H1 (cell line): ENCODE measurements at regions of chr2 and their contacts with region 1.

Region 1: DNA sequence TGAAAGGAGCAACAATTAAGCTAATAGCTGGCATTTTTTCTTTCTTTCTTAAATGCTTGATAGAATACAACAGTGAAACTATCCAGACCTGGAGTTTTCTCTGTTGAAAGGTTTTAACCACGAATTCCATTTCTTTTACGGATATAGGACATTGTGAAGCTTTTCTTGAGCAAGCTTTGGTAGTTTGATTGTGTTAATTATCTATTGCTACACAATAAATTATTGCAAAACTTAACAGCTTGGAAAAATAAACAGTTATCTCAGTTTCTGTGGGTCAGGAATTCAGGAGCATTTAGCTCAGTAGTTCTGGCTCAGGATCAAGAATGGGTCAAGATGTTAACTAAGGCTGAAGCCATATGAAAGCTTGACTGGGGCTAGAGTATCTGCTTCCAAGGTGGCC is 11.7 kb downstream of the PHOSPHO2 start:
- DNase-seq: no peak
- H3K4me3 ChIP-seq: no peak overlapping the region
- H3K27ac ChIP-seq: no peak overlapping the region
- H3K4me1 ChIP-seq: 0 out of 7 replicates have a peak, but pooled peaks cover 0 to 3% (median 0%) of the 10 kb centered on the region in 4 experiments
- H3K27me3 ChIP-seq: no peaks in the 10 kb centered on the region
- CTCF ChIP-seq: no peak
- EP300 ChIP-seq: no peak
- POLR2A ChIP-seq: no peak
- RAD21 ChIP-seq: no peak

Region 2: DNA sequence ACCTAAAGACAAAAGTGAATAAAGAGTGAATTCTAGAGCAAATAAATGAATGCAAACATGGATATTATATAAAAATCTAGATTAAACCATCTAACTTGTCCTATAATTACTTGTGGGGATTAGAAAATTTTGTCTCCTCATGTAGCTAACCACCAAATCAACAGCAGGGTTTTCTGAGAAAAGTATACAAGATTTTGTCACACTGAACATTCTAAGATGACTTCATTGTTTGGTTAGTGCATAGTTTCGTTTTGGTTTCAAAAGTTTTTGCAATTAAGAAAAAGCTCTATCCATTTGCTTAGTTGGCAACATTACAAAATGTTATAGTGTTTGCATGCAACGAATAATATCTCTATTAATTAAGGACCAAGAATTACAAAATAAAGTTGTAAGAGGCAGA is 468.6 kb before region 1 on chr2:
- CTCF ChIA-PET with region 1: no interaction called
- POLR2A ChIA-PET with region 1: no interaction called
- DNase-seq: no peak
- H3K4me3 ChIP-seq: no peak overlapping the region
- H3K27ac ChIP-seq: no peak overlapping the region
- H3K4me1 ChIP-seq: no peaks in the 10 kb centered on the region
- H3K27me3 ChIP-seq: no peaks in the 10 kb centered on the region
- CTCF ChIP-seq: no peak
- EP300 ChIP-seq: no peak
- POLR2A ChIP-seq: no peak
- RAD21 ChIP-seq: no peak

Region 3: GRCh38 chr2:169716238-169716886 is 10.4 kb after region 1 on chr2:
- CTCF ChIA-PET with region 1: interaction called, 4 read pairs
- POLR2A ChIA-PET with region 1: interaction called, 10 read pairs
- DNase-seq: no peak
- H3K4me3 ChIP-seq: no peak overlapping the region
- H3K27ac ChIP-seq: no peak overlapping the region
- H3K4me1 ChIP-seq: peaks cover 0 to 5% (median 1%) of the 10 kb centered on the region in 4 experiments; a peak in 1 of 7 replicates
- H3K27me3 ChIP-seq: no peaks in the 10 kb centered on the region
- CTCF ChIP-seq: no peak
- EP300 ChIP-seq: no peak
- POLR2A ChIP-seq: no peak
- RAD21 ChIP-seq: no peak

Region 4: DNA sequence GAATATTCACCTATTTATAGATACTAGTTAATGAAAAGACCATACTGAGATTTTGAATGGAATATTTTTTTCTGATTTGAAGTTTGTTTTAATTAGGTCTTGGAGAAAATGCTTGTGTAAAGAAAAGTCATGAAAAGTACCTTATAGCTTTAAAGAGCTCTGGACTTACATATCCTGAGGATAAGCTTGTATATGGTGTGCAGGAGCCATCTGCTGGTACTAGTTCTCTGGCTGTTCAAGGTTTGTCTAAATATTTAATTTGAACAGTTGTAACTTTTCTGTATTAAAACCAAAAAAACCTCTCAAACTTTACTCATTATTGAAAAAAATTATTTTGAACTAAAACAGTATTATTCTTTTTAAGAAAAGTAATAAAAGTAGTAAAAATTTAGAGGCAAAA is 171.5 kb after region 1 on chr2:
- CTCF ChIA-PET with region 1: no interaction called
- POLR2A ChIA-PET with region 1: no interaction called
- DNase-seq: no peak
- H3K4me3 ChIP-seq: no peak overlapping the region
- H3K27ac ChIP-seq: no peak overlapping the region
- H3K4me1 ChIP-seq: no peaks in the 10 kb centered on the region
- H3K27me3 ChIP-seq: no peaks in the 10 kb centered on the region
- CTCF ChIP-seq: peak in 1 of 3 experiments; percentile 4; a peak in 1 of 4 replicates
- EP300 ChIP-seq: no peak
- POLR2A ChIP-seq: no peak
- RAD21 ChIP-seq: peak; percentile 28 to 41; a peak in 3 of 4 replicates

Region 5: GRCh38 chr2:169900686-169901085 is 194.8 kb after region 1 on chr2:
- CTCF ChIA-PET with region 1: no interaction called
- POLR2A ChIA-PET with region 1: no interaction called
- DNase-seq: no peak
- H3K4me3 ChIP-seq: no peak overlapping the region
- H3K27ac ChIP-seq: no peak overlapping the region
- H3K4me1 ChIP-seq: no peaks in the 10 kb centered on the region
- H3K27me3 ChIP-seq: no peaks in the 10 kb centered on the region
- CTCF ChIP-seq: no peak
- EP300 ChIP-seq: no peak
- POLR2A ChIP-seq: no peak
- RAD21 ChIP-seq: no peak